SK-N-SH (cell line): ENCODE measurements at regions of chr1 and their contacts with region 1.

Region 1: GRCh38 chr1:248837794-248838356 is at the start of gene ZNF672:
- DNase-seq: peak; percentile 98
- H3K4me3 ChIP-seq: peak within 1 kb of the TSS; percentile 76 to 85
- H3K27ac ChIP-seq: peak within 1 kb of the TSS; percentile 96 to 98
- H3K4me1 ChIP-seq: peaks cover 9 to 12% of the 10 kb centered on the region in 2 experiments; a peak in 3 of 4 replicates
- H3K27me3 ChIP-seq: no peaks in the 10 kb centered on the region
- CTCF ChIP-seq: no peak
- EP300 ChIP-seq: no peak
- RAD21 ChIP-seq: no peak
- polyA plus RNA-seq, gene ZNF672: 14.2 and 16.0 TPM in 2 replicates

Region 2: GRCh38 chr1:248825909-248826760 is 11.7 kb before region 1 on chr1 and contains the start of gene SH3BP5L:
- CTCF ChIA-PET with region 1: interaction called, 28 read pairs
- POLR2A ChIA-PET with region 1: interaction called, 20 read pairs
- DNase-seq: peak; percentile 95
- H3K4me3 ChIP-seq: peak within 1 kb of the TSS; percentile 72
- H3K27ac ChIP-seq: peak within 1 kb of the TSS; percentile 92 to 98
- H3K4me1 ChIP-seq: peaks cover 34 to 38% of the 10 kb centered on the region in 2 experiments
- H3K27me3 ChIP-seq: no peaks in the 10 kb centered on the region
- CTCF ChIP-seq: peak; percentile 70
- EP300 ChIP-seq: 0 out of 4 replicates have a peak, but pooled peaks of 1 of the 2 experiments have one; percentile 26
- RAD21 ChIP-seq: peak; percentile 39
- polyA plus RNA-seq, gene SH3BP5L: 32.1 and 37.3 TPM in 2 replicates

Region 3: GRCh38 chr1:248858891-248859889 is 21.3 kb after region 1 on chr1 and contains the start of gene ZNF692:
- CTCF ChIA-PET with region 1: interaction called, 33 read pairs
- POLR2A ChIA-PET with region 1: interaction called, 23 read pairs
- DNase-seq: peak; percentile 97
- H3K4me3 ChIP-seq: peak within 1 kb of the TSS; percentile 62 to 66
- H3K27ac ChIP-seq: peak within 1 kb of the TSS; percentile 32 to 89
- H3K4me1 ChIP-seq: peaks cover 13 to 31% of the 10 kb centered on the region in 2 experiments; a peak in 3 of 4 replicates
- H3K27me3 ChIP-seq: no peaks in the 10 kb centered on the region
- CTCF ChIP-seq: no peak
- EP300 ChIP-seq: no peak
- RAD21 ChIP-seq: no peak
- polyA plus RNA-seq, gene ZNF692: 47.0 and 62.9 TPM in 2 replicates

Region 4: DNA sequence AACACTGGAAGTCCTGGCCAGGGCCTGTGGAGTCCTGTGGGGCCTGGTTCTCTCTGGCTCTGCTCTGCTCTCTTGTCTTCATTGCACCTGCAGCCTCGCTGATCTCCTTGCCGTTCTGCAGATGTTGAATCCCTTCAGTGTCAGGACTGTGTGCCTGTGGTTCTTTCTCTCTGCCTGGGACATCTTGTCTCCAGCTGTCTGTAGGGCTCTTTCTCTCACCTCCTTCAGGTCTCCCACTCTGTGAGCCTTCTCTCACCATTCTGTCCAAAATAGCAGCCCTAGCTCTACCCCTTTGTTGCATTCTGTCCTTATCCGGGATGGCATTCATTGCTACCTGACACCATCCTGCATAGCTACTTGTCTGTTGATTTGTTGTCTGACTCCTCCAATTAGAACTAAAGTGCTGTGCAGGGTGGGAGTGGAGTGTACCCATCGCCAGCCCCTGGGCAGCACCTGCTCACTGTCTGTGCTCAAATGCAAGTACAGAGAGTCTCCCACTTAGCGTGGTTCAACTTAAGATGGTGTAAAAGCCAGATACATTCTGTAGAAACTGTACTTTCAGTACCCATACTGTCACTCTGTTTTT is 77.0 kb after region 1 on chr1:
- CTCF ChIA-PET with region 1: interaction called, 11 read pairs
- POLR2A ChIA-PET with region 1: no interaction called
- DNase-seq: no peak
- H3K4me3 ChIP-seq: no peak overlapping the region
- H3K27ac ChIP-seq: no peak overlapping the region
- H3K4me1 ChIP-seq: peaks cover 0 to 3% of the 10 kb centered on the region in 2 experiments; a peak in 1 of 4 replicates
- H3K27me3 ChIP-seq: no peaks in the 10 kb centered on the region
- CTCF ChIP-seq: no peak
- EP300 ChIP-seq: no peak
- RAD21 ChIP-seq: no peak

Region 5: GRCh38 chr1:248924696-248925532 is 87.0 kb after region 1 on chr1:
- CTCF ChIA-PET with region 1: interaction called, 12 read pairs
- POLR2A ChIA-PET with region 1: no interaction called
- DNase-seq: peak; percentile 74
- H3K4me3 ChIP-seq: no peak overlapping the region
- H3K27ac ChIP-seq: peak overlapping the region in 1 of 2 experiments; percentile 87; a peak in 2 of 4 replicates
- H3K4me1 ChIP-seq: peaks cover 9 to 15% of the 10 kb centered on the region in 2 experiments
- H3K27me3 ChIP-seq: no peaks in the 10 kb centered on the region
- CTCF ChIP-seq: peak; percentile 74
- EP300 ChIP-seq: no peak
- RAD21 ChIP-seq: peak; percentile 81